ENCODE measurements at regions of chr5 and their contacts with region 1.

Region 1: GRCh38 chr5:88606626-88607025 is 276.4 kb downstream of the MEF2C start:
- DNase-seq: peak; percentile 74
- ATAC-seq: peak; percentile 64
- H3K4me3 ChIP-seq: no peak overlapping the region
- H3K27ac ChIP-seq: peak overlapping the region; percentile 73
- H3K4me1 ChIP-seq: peaks cover 44% of the 10 kb centered on the region
- H3K27me3 ChIP-seq: no peaks in the 10 kb centered on the region
- CTCF ChIP-seq: no peak

Region 2: GRCh38 chr5:88268385-88269184 is 338.0 kb before region 1 on chr5 and contains the start of gene TMEM161B:
- CTCF ChIA-PET with region 1: no interaction called
- POLR2A ChIA-PET with region 1: no interaction called
- intact Hi-C with region 1: loop called (anchors 5 kb)
- DNase-seq: peak; percentile 93
- ATAC-seq: peak; percentile 98
- H3K4me3 ChIP-seq: peak within 1 kb of the TSS; percentile 96
- H3K27ac ChIP-seq: peak within 1 kb of the TSS; percentile 28; the same call in 1 of the 2 replicates
- H3K4me1 ChIP-seq: peaks cover 33% of the 10 kb centered on the region
- H3K27me3 ChIP-seq: no peaks in the 10 kb centered on the region
- CTCF ChIP-seq: no peak
- total RNA-seq, gene TMEM161B: 11.5 and 12.2 TPM in 2 replicates

Region 3: DNA sequence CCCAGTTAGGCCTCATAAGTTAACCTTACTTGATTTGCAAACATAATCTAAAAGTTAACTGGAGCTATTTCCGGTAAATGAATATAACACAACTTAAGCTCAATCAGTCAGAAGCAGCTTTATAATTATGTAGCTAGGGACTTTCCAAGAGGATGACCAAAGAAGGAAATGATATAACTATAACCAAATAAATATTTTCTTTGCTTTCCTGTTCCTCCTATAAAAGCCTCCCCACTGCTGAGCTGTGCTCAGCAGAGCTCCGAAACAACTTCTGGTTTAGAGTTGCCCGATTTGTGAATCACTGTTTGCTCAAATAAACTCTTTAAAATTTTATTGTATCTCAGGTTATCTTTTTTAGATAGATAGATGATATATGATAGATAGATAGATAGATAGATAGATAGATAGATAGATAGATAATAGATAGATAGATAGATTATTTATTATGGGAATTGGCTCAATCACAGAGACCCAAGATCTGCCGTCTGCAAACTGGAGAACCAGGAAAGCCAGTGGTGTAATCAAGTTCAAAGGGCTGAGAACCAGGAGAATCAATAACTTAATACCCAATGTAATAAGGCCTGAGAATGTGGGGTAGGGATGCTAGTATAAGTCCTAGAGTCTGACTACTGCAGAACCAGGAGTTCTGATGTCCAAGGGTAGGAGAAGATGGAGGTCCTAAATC is 318.6 kb before region 1 on chr5:
- CTCF ChIA-PET with region 1: no interaction called
- POLR2A ChIA-PET with region 1: interaction called, 4 read pairs
- intact Hi-C with region 1: loop called (anchors 2 kb)
- DNase-seq: peak; percentile 64
- ATAC-seq: peak; percentile 82
- H3K4me3 ChIP-seq: no peak overlapping the region; the same call in 1 of the 2 replicates
- H3K27ac ChIP-seq: peak overlapping the region; percentile 77
- H3K4me1 ChIP-seq: peaks cover 33% of the 10 kb centered on the region
- H3K27me3 ChIP-seq: no peaks in the 10 kb centered on the region
- CTCF ChIP-seq: no peak

Region 4: DNA sequence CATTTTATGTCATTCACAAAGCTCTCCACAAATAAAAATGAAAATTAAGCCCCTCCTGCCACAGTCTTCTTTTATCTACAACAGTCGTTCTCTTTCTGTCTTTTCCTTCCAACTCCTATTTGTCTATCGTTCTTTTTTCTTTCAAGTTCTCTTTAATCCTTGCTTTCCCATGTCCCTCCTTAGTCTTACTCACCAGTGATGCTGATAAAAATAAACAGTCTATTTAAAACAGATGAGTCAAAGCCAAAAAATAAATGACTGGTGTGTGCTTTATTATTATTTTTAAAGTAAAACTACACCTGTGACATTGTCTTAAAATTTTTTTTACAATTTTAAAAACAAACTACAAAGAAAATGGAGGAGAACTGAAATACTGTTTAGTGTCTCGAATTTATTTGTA is 200.8 kb before region 1 on chr5:
- CTCF ChIA-PET with region 1: no interaction called
- POLR2A ChIA-PET with region 1: no interaction called
- intact Hi-C with region 1: loop called (anchors 5 kb)
- DNase-seq: peak; percentile 63
- ATAC-seq: peak; percentile 94
- H3K4me3 ChIP-seq: peak overlapping the region; percentile 36
- H3K27ac ChIP-seq: peak overlapping the region; percentile 71
- H3K4me1 ChIP-seq: peaks cover 15% of the 10 kb centered on the region
- H3K27me3 ChIP-seq: no peaks in the 10 kb centered on the region
- CTCF ChIP-seq: no peak

Region 5: GRCh38 chr5:88515876-88516819 is 90.5 kb before region 1 on chr5:
- CTCF ChIA-PET with region 1: no interaction called
- POLR2A ChIA-PET with region 1: no interaction called
- intact Hi-C with region 1: loop called (anchors 1 kb)
- DNase-seq: peak; percentile 86
- ATAC-seq: peak; percentile 96
- H3K4me3 ChIP-seq: no peak overlapping the region
- H3K27ac ChIP-seq: peak overlapping the region; percentile 47
- H3K4me1 ChIP-seq: peaks cover 18% of the 10 kb centered on the region
- H3K27me3 ChIP-seq: no peaks in the 10 kb centered on the region
- CTCF ChIP-seq: no peak

Region 6: GRCh38 chr5:88746438-88746882 is 139.8 kb after region 1 on chr5:
- CTCF ChIA-PET with region 1: no interaction called
- POLR2A ChIA-PET with region 1: no interaction called
- intact Hi-C with region 1: no loop called
- DNase-seq: no peak
- ATAC-seq: no peak
- H3K4me3 ChIP-seq: no peak overlapping the region
- H3K27ac ChIP-seq: no peak overlapping the region
- H3K4me1 ChIP-seq: peaks cover 12% of the 10 kb centered on the region
- H3K27me3 ChIP-seq: no peaks in the 10 kb centered on the region
- CTCF ChIP-seq: no peak

Measured in PC-3 (cell line).